GM12878 (cell line): ENCODE measurements at regions of chr2 and their contacts with region 1.

Region 1: GRCh38 chr2:144320491-144320890 is 199.4 kb downstream of the ZEB2 start:
- DNase-seq: no peak
- ATAC-seq: no peak
- H3K4me3 ChIP-seq: no peak overlapping the region
- H3K27ac ChIP-seq: no peak overlapping the region
- H3K4me1 ChIP-seq: peaks cover 12% of the 10 kb centered on the region; the same call in 1 of the 2 replicates
- H3K27me3 ChIP-seq: no peaks in the 10 kb centered on the region
- CTCF ChIP-seq: no peak
- EP300 ChIP-seq: no peak
- POLR2A ChIP-seq: no peak
- RAD21 ChIP-seq: no peak

Region 2: DNA sequence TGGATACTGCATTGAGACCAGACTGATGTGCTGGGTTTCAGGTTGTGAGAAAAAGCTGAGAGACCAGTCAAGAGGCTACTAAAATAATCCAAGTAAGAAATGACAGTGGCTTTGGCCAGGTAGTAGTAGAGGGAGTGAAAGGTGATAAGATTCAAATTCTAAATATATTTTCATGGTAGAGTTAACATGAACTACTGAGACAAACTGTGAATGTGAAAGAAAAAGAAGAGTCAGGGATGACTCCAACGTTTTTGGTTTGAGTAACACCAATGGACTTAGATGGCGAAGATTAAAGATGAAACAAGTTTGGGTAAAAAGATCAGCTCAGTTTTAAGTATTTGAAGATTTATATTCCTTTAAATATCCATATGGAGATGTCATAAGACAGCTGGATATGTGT is 10.0 kb before region 1 on chr2:
- CTCF ChIA-PET with region 1: interaction called, 7 read pairs
- POLR2A ChIA-PET with region 1: no interaction called
- RAD21 ChIA-PET with region 1: interaction called, 4 read pairs
- SMC1A ChIA-PET with region 1: interaction called, 15 read pairs
- in situ Hi-C with region 1: no loop called
- intact Hi-C with region 1: no loop called
- DNase-seq: no peak
- ATAC-seq: peak; percentile 64
- H3K4me3 ChIP-seq: 0 out of 2 replicates have a peak overlapping the region, but pooled peaks have one; percentile 6
- H3K27ac ChIP-seq: no peak overlapping the region
- H3K4me1 ChIP-seq: 0 out of 2 replicates have a peak, but pooled peaks cover 3% of the 10 kb centered on the region
- H3K27me3 ChIP-seq: no peaks in the 10 kb centered on the region
- CTCF ChIP-seq: no peak
- EP300 ChIP-seq: no peak
- POLR2A ChIP-seq: no peak
- RAD21 ChIP-seq: no peak

Region 3: GRCh38 chr2:144382849-144383248 is 62.4 kb after region 1 on chr2:
- CTCF ChIA-PET with region 1: interaction called, 3 read pairs
- POLR2A ChIA-PET with region 1: no interaction called
- RAD21 ChIA-PET with region 1: no interaction called
- SMC1A ChIA-PET with region 1: no interaction called
- in situ Hi-C with region 1: no loop called
- intact Hi-C with region 1: loop called (anchors 2 kb)
- DNase-seq: peak; percentile 80
- ATAC-seq: peak; percentile 99
- H3K4me3 ChIP-seq: no peak overlapping the region
- H3K27ac ChIP-seq: no peak overlapping the region
- H3K4me1 ChIP-seq: peaks cover 8% of the 10 kb centered on the region; the same call in 1 of the 2 replicates
- H3K27me3 ChIP-seq: no peaks in the 10 kb centered on the region; a peak in 1 of 4 replicates
- CTCF ChIP-seq: no peak
- EP300 ChIP-seq: peak; percentile 22 to 49; a peak in 1 of 4 replicates
- POLR2A ChIP-seq: no peak
- RAD21 ChIP-seq: no peak

Region 4: GRCh38 chr2:144493027-144493809 is 172.7 kb after region 1 on chr2:
- CTCF ChIA-PET with region 1: no interaction called
- POLR2A ChIA-PET with region 1: no interaction called
- RAD21 ChIA-PET with region 1: no interaction called
- SMC1A ChIA-PET with region 1: no interaction called
- in situ Hi-C with region 1: no loop called
- intact Hi-C with region 1: no loop called
- DNase-seq: no peak
- ATAC-seq: no peak
- H3K4me3 ChIP-seq: no peak overlapping the region
- H3K27ac ChIP-seq: no peak overlapping the region
- H3K4me1 ChIP-seq: no peaks in the 10 kb centered on the region
- H3K27me3 ChIP-seq: peaks cover 0 to 3% of the 10 kb centered on the region in 2 experiments; a peak in 2 of 4 replicates
- CTCF ChIP-seq: no peak
- EP300 ChIP-seq: no peak
- POLR2A ChIP-seq: no peak
- RAD21 ChIP-seq: no peak